WTC11 (cell line): ENCODE measurements at regions of chr2 and their contacts with region 1.

Region 1: DNA sequence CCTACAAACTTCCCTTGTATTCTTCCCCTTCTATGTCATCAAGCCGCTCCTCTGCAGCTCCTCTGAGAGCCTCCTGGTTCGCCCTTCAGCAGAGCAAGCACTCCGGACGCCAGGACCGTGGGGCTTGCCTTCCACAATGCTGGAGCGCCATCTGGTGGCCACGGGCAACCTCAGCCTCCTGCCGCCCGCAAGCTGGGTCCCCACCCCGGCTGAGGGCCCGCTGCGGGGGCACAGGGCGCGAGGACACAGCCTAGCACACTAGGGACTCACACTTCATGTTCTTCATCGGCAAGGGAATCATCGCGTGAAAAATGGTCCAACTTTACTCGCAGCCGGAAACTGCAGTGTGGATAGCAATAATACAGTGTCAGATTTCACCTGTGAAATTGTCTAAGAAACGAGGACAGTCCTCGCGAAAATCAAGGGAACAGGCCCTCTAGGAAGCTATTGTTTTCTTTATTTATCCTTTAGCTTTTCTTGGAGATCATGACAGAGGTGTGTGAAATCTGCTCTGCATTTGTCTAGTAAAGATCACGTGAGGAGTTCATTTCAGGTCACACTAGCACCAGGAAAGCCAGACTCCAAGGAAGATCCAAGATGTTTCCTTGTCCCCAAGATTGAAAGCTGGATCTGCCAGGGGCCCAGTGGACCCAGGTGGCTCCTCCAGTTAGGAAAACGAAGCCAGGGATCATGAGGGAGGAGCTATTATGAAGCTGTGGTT is 5.8 kb downstream of the PRLH start:
- DNase-seq: peak; percentile 97
- ATAC-seq: peak; percentile 91
- H3K4me3 Mint-ChIP-seq: no peak overlapping the region
- H3K27ac Mint-ChIP-seq: peak overlapping the region; percentile 24; the same call in 1 of the 2 replicates
- H3K4me1 Mint-ChIP-seq: peaks cover 41% of the 10 kb centered on the region
- H3K27me3 Mint-ChIP-seq: no peaks in the 10 kb centered on the region
- CTCF ChIP-seq: peak; percentile 96

Region 2: GRCh38 chr2:237421542-237422116 is 150.6 kb before region 1 on chr2:
- CTCF ChIA-PET with region 1: interaction called, 51 read pairs
- POLR2A ChIA-PET with region 1: no interaction called
- DNase-seq: peak; percentile 90
- ATAC-seq: peak; percentile 98
- H3K4me3 Mint-ChIP-seq: peak overlapping the region; percentile 34; the same call in 1 of the 2 replicates
- H3K27ac Mint-ChIP-seq: no peak overlapping the region
- H3K4me1 Mint-ChIP-seq: peaks cover 9% of the 10 kb centered on the region
- H3K27me3 Mint-ChIP-seq: peaks cover 44% of the 10 kb centered on the region
- CTCF ChIP-seq: peak; percentile 69; the same call in 1 of the 2 replicates

Region 3: GRCh38 chr2:237500681-237501424 is 71.3 kb before region 1 on chr2:
- CTCF ChIA-PET with region 1: interaction called, 14 read pairs
- POLR2A ChIA-PET with region 1: no interaction called
- DNase-seq: no peak
- ATAC-seq: no peak
- H3K4me3 Mint-ChIP-seq: no peak overlapping the region
- H3K27ac Mint-ChIP-seq: peak overlapping the region; percentile 12; the same call in 1 of the 2 replicates
- H3K4me1 Mint-ChIP-seq: peaks cover 24% of the 10 kb centered on the region
- H3K27me3 Mint-ChIP-seq: no peaks in the 10 kb centered on the region
- CTCF ChIP-seq: no peak

Region 4: DNA sequence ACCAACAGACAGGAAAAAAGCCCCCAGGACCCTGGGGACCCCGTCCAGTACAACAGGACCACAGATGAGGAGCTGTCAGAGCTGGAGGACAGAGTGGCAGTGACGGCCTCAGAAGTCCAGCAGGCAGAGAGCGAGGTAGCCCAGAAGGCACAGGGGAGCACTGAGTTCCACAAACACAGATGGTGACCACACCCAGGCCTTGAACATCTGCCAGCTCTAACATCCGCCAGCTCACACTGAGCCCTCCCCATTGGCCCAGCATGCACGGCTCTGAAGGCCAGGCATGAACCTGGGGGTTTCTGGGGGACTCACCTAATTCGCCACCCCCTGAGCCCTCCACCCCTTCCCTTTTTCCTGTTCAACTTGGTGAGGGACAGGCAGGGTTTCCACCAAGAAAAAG is 31.4 kb before region 1 on chr2:
- CTCF ChIA-PET with region 1: interaction called, 54 read pairs
- POLR2A ChIA-PET with region 1: no interaction called
- DNase-seq: no peak
- ATAC-seq: no peak
- H3K4me3 Mint-ChIP-seq: no peak overlapping the region
- H3K27ac Mint-ChIP-seq: no peak overlapping the region
- H3K4me1 Mint-ChIP-seq: peaks cover 8% of the 10 kb centered on the region
- H3K27me3 Mint-ChIP-seq: no peaks in the 10 kb centered on the region; the same call in 1 of the 2 replicates
- CTCF ChIP-seq: no peak

Region 5: GRCh38 chr2:237596520-237596860 is 24.3 kb after region 1 on chr2:
- CTCF ChIA-PET with region 1: interaction called, 36 read pairs
- POLR2A ChIA-PET with region 1: interaction called, 3 read pairs
- DNase-seq: no peak
- ATAC-seq: no peak
- H3K4me3 Mint-ChIP-seq: no peak overlapping the region
- H3K27ac Mint-ChIP-seq: no peak overlapping the region
- H3K4me1 Mint-ChIP-seq: peaks cover 80% of the 10 kb centered on the region
- H3K27me3 Mint-ChIP-seq: no peaks in the 10 kb centered on the region; the same call in 1 of the 2 replicates
- CTCF ChIP-seq: no peak

Region 6: DNA sequence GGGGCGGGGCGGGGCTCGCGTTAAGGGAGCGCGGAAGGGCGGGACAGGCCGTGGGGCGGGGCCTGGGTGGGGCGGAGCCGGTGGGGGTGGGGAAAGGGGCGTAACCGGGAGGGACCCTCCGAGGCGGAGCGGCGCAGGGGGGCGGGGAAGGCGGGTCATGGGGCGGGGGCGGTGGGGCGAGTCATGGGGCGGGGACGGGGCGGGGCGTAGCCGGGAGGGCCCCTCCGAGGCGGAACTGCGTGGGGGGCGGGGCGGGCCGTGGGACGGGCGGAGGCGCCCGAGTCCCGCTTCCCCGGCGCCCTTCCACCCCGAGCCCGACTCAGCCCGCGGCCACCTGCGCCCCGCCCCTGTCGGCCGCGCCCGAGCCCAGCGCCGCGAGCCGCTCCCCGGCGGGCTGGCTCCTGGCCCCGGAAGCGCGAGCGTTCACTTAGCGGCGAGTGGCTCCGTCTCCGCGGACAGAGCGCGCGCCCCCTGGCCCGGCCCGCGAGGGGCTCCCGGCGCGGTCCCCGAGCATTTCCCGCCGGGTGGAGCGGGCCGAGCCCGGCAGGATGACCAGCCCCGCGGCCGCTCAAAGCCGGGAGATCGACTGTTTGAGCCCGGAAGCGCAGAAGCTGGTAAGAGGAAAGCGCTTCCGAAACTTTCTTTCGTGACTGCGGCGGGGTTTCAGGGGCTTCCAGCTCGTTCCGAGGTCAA is 119.9 kb after region 1 on chr2:
- CTCF ChIA-PET with region 1: interaction called, 13 read pairs
- POLR2A ChIA-PET with region 1: no interaction called
- DNase-seq: peak; percentile 97
- ATAC-seq: peak; percentile 82
- H3K4me3 Mint-ChIP-seq: peak overlapping the region; percentile 75
- H3K27ac Mint-ChIP-seq: no peak overlapping the region
- H3K4me1 Mint-ChIP-seq: peaks cover 54% of the 10 kb centered on the region
- H3K27me3 Mint-ChIP-seq: no peaks in the 10 kb centered on the region
- CTCF ChIP-seq: no peak

Region 7: GRCh38 chr2:237951878-237952277 is 379.7 kb after region 1 on chr2:
- CTCF ChIA-PET with region 1: no interaction called
- POLR2A ChIA-PET with region 1: no interaction called
- DNase-seq: no peak
- ATAC-seq: no peak
- H3K4me3 Mint-ChIP-seq: no peak overlapping the region
- H3K27ac Mint-ChIP-seq: no peak overlapping the region
- H3K4me1 Mint-ChIP-seq: peaks cover 10% of the 10 kb centered on the region; the same call in 1 of the 2 replicates
- H3K27me3 Mint-ChIP-seq: peaks cover 15% of the 10 kb centered on the region
- CTCF ChIP-seq: no peak